IMR-90 (cell line): ENCODE measurements at regions of chr14 and their contacts with region 1.

Region 1: GRCh38 chr14:31920989-31921650 is 156.0 kb upstream of the ARHGAP5 start:
- DNase-seq: peak; percentile 22
- ATAC-seq: peak; percentile 51
- H3K4me3 ChIP-seq: no peak overlapping the region
- H3K27ac ChIP-seq: no peak overlapping the region
- H3K4me1 ChIP-seq: no peaks in the 10 kb centered on the region; the same call in 1 of the 2 replicates
- H3K27me3 ChIP-seq: no peaks in the 10 kb centered on the region
- CTCF ChIP-seq: no peak
- POLR2A ChIP-seq: no peak
- RAD21 ChIP-seq: no peak

Region 2: GRCh38 chr14:31897581-31898186 is 23.4 kb before region 1 on chr14:
- CTCF ChIA-PET with region 1: no interaction called
- POLR2A ChIA-PET with region 1: no interaction called
- dilution Hi-C with region 1: no loop called
- in situ Hi-C with region 1: no loop called
- intact Hi-C with region 1: loop called (anchors 2 kb)
- DNase-seq: no peak
- ATAC-seq: peak; percentile 53
- H3K4me3 ChIP-seq: no peak overlapping the region
- H3K27ac ChIP-seq: no peak overlapping the region
- H3K4me1 ChIP-seq: peaks cover 12% of the 10 kb centered on the region
- H3K27me3 ChIP-seq: no peaks in the 10 kb centered on the region
- CTCF ChIP-seq: no peak
- POLR2A ChIP-seq: no peak
- RAD21 ChIP-seq: no peak